Activated naive CD4-positive, alpha-beta T cell treated with anti-CD3 and anti-CD28 coated beads for 36 hours (primary cell): ENCODE measurements at regions of chr6 and their contacts with region 1.

Region 1: DNA sequence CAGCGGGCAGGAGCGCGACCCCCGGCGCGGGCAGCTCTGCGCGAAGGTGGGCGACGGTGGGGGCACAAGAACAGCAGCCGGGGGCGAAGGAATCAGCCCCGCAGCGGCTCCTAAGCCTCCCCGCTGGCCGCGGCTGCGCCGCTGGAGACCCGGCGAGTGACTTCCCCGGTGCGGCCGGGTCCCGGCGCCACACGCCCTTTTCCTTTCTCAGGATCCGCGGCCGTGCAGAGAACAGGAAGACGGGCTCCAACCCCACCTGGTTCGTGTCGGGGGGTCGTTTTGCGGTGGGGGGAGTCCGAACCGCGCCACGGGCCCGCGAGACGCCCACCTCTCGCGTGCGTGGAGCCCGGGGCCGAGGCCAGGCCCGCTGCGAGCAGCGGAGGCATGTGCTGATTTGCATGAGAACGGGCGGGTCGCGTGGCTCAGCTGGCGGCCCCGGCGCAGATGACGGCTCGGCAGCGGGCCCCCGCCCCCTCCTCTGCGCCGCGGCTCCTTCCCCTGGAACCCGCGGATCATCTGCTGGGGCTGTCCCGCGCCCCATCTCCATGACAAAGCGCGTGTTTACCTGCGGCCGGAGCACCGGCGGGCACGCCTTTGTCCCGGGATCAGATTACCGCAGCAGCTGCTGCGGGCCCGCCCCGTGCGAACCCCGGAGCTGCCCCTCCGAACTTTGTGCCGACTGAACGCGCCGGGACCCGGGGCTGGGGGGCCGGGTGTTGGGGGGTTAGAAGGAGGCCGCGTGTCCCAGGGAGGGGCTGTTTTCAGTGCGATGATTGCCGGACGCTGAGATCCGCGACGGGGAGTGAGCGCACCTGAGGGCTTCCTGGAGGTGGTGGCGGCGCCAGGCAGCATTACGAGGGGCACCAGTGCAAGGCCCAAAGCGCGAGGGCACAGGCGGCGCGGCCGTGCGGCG is 4.9 kb upstream of the DLL1 start:
- DNase-seq: peak; percentile 73
- H3K4me3 Mint-ChIP-seq: peak overlapping the region; percentile 68
- H3K27ac Mint-ChIP-seq: no peak overlapping the region
- H3K4me1 Mint-ChIP-seq: peaks cover 33% of the 10 kb centered on the region
- H3K27me3 Mint-ChIP-seq: peaks cover 65% of the 10 kb centered on the region

Region 2: GRCh38 chr6:168956884-168957730 is 1338.7 kb before region 1 on chr6:
- CTCF ChIA-PET with region 1: no interaction called
- intact Hi-C with region 1: loop called (anchors 2 kb)
- DNase-seq: peak; percentile 68
- H3K4me3 Mint-ChIP-seq: no peak overlapping the region
- H3K27ac Mint-ChIP-seq: no peak overlapping the region
- H3K4me1 Mint-ChIP-seq: no peaks in the 10 kb centered on the region
- H3K27me3 Mint-ChIP-seq: peaks cover 13% of the 10 kb centered on the region

Region 3: GRCh38 chr6:169831450-169832246 is 464.1 kb before region 1 on chr6:
- CTCF ChIA-PET with region 1: interaction called, 6 read pairs
- intact Hi-C with region 1: loop called (anchors 1 kb)
- DNase-seq: peak; percentile 82
- H3K4me3 Mint-ChIP-seq: no peak overlapping the region
- H3K27ac Mint-ChIP-seq: no peak overlapping the region
- H3K4me1 Mint-ChIP-seq: no peaks in the 10 kb centered on the region
- H3K27me3 Mint-ChIP-seq: peaks cover 35% of the 10 kb centered on the region

Region 4: DNA sequence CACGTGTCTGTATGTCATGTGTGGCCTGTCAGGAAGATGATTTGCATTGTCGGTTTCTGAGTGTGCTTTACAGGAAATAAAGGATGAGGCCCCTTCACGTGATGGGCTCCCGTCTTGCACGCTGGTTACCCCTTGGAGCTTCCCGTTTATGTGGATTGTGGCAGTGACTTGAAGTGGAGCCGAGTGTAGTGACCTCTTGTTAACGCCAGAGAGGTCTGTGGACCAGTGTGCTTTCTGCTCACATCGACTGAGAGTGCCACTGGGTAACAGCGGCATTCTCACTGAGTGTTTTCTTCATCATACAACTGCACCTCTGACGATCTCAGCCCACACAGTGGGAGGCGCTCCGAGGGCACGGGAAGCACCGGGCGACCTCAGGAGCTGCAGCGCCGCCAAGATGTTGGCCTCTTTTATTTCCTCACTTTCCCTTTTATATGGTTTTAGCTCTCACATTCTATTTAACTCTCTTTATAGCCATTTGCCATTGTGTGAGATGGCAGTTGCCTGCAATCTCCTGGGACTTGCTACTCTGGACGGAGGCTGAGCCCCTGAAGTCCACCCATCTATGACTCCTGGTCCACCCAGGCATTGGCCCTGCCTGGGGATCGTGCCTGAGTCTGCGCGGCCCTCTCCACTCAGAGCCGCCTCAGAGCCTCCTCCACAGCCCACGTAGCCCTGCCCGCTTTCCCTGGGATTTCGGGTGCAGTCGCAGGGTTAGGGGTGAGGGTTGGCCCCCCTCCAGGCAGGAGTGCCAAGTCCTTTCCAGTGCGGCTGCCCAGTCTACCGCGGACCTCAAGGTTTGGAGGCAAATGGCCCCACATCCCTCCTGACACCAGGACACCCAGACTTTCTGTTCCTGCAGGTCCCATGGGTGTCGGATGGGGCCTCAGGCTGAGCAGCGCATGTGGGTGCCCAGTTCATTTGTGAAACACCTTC is 305.4 kb before region 1 on chr6:
- CTCF ChIA-PET with region 1: interaction called, 3 read pairs
- intact Hi-C with region 1: loop called (anchors 1 kb)
- DNase-seq: peak; percentile 89
- H3K4me3 Mint-ChIP-seq: peak overlapping the region; percentile 65
- H3K27ac Mint-ChIP-seq: peak overlapping the region; percentile 93
- H3K4me1 Mint-ChIP-seq: peaks cover 37% of the 10 kb centered on the region
- H3K27me3 Mint-ChIP-seq: no peaks in the 10 kb centered on the region

Region 5: GRCh38 chr6:170114956-170115855 is 180.6 kb before region 1 on chr6:
- CTCF ChIA-PET with region 1: no interaction called
- intact Hi-C with region 1: no loop called
- DNase-seq: no peak
- H3K4me3 Mint-ChIP-seq: no peak overlapping the region
- H3K27ac Mint-ChIP-seq: no peak overlapping the region
- H3K4me1 Mint-ChIP-seq: no peaks in the 10 kb centered on the region
- H3K27me3 Mint-ChIP-seq: no peaks in the 10 kb centered on the region

Region 6: GRCh38 chr6:170178561-170179477 is 116.9 kb before region 1 on chr6:
- CTCF ChIA-PET with region 1: no interaction called
- intact Hi-C with region 1: loop called (anchors 5 kb)
- DNase-seq: no peak
- H3K4me3 Mint-ChIP-seq: no peak overlapping the region
- H3K27ac Mint-ChIP-seq: no peak overlapping the region
- H3K4me1 Mint-ChIP-seq: no peaks in the 10 kb centered on the region
- H3K27me3 Mint-ChIP-seq: no peaks in the 10 kb centered on the region

Region 7: DNA sequence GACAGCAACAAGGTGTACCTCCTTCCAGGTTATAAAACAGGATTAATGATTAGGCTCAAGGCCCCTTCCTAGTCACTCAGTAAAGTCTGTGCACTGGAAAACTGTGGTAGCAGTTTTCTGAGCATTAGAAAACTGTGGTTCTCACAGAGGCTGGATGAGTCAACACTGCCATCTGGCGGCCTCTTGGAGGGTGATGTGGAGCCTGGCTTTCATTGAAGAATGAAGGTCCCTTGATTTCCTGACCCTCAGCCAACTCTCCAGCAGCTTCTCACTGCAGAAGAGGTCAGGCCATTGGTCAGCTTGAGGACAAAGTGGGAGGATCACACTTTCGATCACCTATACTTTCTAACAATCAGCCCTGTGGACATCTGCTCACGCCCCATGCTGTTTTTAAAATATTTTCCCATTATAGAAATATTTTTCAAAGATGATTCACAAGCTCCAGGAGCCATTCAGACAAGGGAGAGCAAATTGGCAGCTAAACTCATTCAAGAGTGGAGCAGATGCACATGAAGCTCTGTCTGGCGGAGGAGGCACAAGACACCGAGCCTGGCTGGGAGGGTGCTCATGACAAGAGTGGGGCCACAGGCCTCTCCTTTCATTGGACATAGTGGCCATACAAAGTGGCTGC is 234.2 kb after region 1 on chr6:
- CTCF ChIA-PET with region 1: no interaction called
- intact Hi-C with region 1: loop called (anchors 5 kb)
- DNase-seq: peak; percentile 84
- H3K4me3 Mint-ChIP-seq: no peak overlapping the region
- H3K27ac Mint-ChIP-seq: no peak overlapping the region
- H3K4me1 Mint-ChIP-seq: no peaks in the 10 kb centered on the region
- H3K27me3 Mint-ChIP-seq: no peaks in the 10 kb centered on the region